Aorta (tissue), 5 donors: ENCODE measurements at regions of chr18 and their contacts with region 1.

Region 1: DNA sequence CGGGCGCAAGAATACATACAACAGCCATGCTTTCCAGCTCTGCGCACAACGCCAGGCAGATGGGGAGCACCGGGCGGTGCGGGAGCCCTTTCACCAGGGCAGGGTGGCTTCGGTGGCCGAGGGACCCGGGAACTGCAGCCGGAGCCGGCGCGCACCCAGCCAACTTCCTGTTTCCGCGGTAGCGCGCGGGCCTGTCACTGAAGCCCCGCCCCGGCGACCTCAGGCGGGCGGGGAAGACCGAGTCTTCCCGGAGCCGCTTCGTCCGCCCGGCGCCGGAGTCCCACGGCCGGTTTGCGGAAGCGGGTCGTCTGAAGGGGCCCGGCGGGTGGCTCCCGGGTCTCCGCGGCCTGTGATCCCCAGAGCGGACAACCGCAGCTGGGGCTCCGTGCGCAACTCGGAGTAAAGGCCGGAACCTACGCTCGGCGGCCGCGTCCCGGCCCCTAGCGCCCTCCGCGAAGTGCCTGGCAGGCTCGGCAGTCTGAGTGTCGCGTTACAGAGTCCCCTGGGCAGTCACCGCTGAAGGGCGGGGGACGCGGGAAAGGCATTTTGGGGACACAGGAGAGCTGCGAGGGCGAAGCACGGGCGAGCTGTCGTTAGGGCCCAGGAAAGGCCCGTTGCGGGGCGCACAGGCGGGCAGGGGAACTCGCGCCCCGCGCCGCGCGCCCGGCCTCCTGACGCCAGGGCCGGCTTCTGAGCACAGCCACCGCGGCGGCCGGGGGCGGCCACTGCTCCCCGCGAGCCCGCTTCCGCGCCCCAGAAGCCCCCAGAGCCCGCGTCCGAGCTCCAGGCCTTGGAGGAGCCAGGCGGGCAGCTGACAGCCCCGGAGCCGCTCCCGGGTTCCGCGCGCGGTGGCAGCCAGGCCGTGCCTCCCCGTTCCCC is at the start of gene MPPE1:
- DNase-seq: peak; percentile 95 to 97
- ATAC-seq: peak; percentile 97
- H3K4me3 ChIP-seq: peak within 1 kb of the TSS; percentile 91 to 97
- H3K27ac ChIP-seq: peak within 1 kb of the TSS; percentile 92 to 99
- H3K4me1 ChIP-seq: no peaks in the 10 kb centered on the region
- H3K27me3 ChIP-seq: no peaks in the 10 kb centered on the region
- total RNA-seq, gene MPPE1: 32.4 to 49.8 TPM

Region 2: GRCh38 chr18:11676867-11677266 is 231.6 kb before region 1 on chr18:
- intact Hi-C with region 1: no loop called
- DNase-seq: no peak
- ATAC-seq: no peak
- H3K4me3 ChIP-seq: no peak overlapping the region
- H3K27ac ChIP-seq: no peak overlapping the region
- H3K4me1 ChIP-seq: no peaks in the 10 kb centered on the region
- H3K27me3 ChIP-seq: no peaks in the 10 kb centered on the region

Region 3: DNA sequence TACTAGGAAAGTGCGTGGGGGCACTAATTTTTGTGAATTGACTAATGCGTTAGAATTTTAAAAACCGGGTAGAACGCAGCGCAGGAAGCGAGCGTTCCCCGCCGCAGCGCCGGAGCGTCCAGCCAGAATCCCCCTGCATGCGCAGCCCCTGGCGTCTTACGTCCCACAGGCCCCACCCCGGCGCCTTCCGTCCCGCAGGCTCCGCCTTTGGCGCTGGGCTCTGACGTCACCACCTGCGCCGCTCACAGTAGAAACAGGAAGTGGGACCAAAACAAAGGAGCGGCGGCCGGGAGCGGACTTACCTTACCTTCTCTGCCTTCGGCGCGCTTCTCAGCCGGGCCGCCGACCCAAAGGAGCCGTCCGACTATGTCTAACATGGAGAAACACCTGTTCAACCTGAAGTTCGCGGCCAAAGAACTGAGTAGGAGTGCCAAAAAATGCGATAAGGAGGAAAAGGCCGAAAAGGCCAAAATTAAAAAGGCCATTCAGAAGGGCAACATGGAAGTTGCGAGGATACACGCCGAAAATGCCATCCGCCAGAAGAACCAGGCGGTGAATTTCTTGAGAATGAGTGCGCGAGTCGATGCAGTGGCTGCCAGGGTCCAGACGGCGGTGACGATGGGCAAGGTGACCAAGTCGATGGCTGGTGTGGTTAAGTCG is 57.1 kb before region 1 on chr18 and contains the start of gene CHMP1B:
- intact Hi-C with region 1: loop called (anchors 2 to 5 kb)
- DNase-seq: peak; percentile 99 to 100
- ATAC-seq: peak; percentile 99
- H3K4me3 ChIP-seq: peak within 1 kb of the TSS; percentile 94 to 100
- H3K27ac ChIP-seq: peak within 1 kb of the TSS; percentile 95 to 99
- H3K4me1 ChIP-seq: peaks cover 0 to 2% of the 10 kb centered on the region in 2 donors
- H3K27me3 ChIP-seq: no peaks in the 10 kb centered on the region
- total RNA-seq, gene CHMP1B: 33.0 to 42.8 TPM

Region 4: GRCh38 chr18:12005538-12006487 is 97.4 kb after region 1 on chr18:
- intact Hi-C with region 1: no loop called
- DNase-seq: peak in 1 of 2 donors; percentile 35
- ATAC-seq: no peak
- H3K4me3 ChIP-seq: no peak overlapping the region
- H3K27ac ChIP-seq: no peak overlapping the region
- H3K4me1 ChIP-seq: no peaks in the 10 kb centered on the region
- H3K27me3 ChIP-seq: no peaks in the 10 kb centered on the region